ENCODE measurements at regions of chr3 and their contacts with region 1.

Region 1: GRCh38 chr3:148379763-148380382 is 317.8 kb upstream of the AGTR1 start:
- DNase-seq: no peak
- H3K4me3 ChIP-seq: no peak overlapping the region
- H3K27ac ChIP-seq: no peak overlapping the region
- H3K4me1 ChIP-seq: no peaks in the 10 kb centered on the region
- H3K27me3 ChIP-seq: no peaks in the 10 kb centered on the region
- CTCF ChIP-seq: peak; percentile 36

Region 2: DNA sequence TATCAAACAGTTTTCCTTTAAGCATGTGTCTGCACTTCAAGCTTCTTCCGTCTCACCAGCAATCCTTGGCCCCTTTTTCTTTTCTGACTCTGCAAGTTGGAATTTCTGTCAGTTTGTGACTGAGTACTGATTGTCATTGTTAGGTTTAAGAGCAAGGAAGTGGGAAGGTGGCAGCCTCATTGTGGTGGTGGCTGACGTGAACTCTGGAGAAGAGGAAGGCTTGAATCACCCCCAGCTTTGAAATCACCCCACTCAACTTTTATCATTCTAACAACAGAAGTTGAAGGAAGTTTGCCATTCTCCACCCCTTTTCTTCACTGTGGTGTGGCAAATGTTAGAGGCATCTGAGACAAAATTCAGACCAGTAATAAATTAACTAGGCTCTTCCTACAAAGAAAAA is 86.3 kb after region 1 on chr3:
- intact Hi-C with region 1: no loop called
- DNase-seq: no peak
- H3K4me3 ChIP-seq: no peak overlapping the region
- H3K27ac ChIP-seq: no peak overlapping the region
- H3K4me1 ChIP-seq: no peaks in the 10 kb centered on the region
- H3K27me3 ChIP-seq: no peaks in the 10 kb centered on the region
- CTCF ChIP-seq: no peak

Region 3: DNA sequence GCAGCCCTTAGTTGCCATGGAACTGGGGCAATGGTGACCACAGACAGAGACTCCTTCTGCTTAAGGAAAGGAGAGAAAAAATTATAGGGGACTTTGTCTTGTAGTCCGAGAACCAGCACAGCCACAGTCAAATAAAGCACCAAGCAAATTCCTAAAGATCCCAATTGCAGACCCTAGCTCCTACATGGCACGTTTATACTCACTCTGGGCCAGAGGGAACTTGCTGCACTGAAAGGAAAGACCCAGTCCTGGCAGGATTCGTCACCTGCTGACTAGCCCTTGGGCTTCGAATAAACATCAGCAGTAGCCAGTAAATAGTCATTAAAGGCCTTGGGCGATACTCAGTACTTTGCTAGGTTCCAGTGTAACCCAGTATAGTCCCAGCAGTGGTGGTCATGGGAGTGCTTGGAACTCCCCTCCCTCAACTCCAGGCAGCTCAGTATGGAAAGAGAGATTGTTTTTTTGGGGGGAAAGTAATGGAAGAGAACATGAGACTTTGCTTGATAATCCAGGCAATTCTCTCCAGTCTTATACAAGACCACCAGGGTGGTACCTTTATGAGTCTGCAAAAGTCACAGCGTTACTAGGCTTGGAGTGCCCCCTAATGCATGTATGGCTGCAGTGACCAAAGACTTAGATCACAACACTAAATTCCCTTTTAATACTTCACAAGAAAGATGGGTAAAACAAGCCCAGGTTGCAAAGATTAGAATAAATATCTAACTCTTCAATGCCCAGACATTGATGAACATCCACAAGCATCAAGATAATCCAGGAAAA is 251.4 kb after region 1 on chr3:
- intact Hi-C with region 1: loop called (anchors 5 kb)
- DNase-seq: no peak
- H3K4me3 ChIP-seq: no peak overlapping the region
- H3K27ac ChIP-seq: no peak overlapping the region
- H3K4me1 ChIP-seq: no peaks in the 10 kb centered on the region
- H3K27me3 ChIP-seq: no peaks in the 10 kb centered on the region
- CTCF ChIP-seq: no peak

Region 4: GRCh38 chr3:148718982-148719862 is 339.3 kb after region 1 on chr3:
- intact Hi-C with region 1: loop called (anchors 5 kb)
- DNase-seq: no peak
- H3K4me3 ChIP-seq: no peak overlapping the region
- H3K27ac ChIP-seq: no peak overlapping the region
- H3K4me1 ChIP-seq: no peaks in the 10 kb centered on the region
- H3K27me3 ChIP-seq: no peaks in the 10 kb centered on the region
- CTCF ChIP-seq: peak; percentile 47

Region 5: GRCh38 chr3:148943506-148944205 is 563.8 kb after region 1 on chr3:
- intact Hi-C with region 1: loop called (anchors 5 kb)
- DNase-seq: peak; percentile 23
- H3K4me3 ChIP-seq: no peak overlapping the region
- H3K27ac ChIP-seq: no peak overlapping the region
- H3K4me1 ChIP-seq: no peaks in the 10 kb centered on the region
- H3K27me3 ChIP-seq: no peaks in the 10 kb centered on the region
- CTCF ChIP-seq: peak; percentile 60

Measured in colonic mucosa (tissue), 4 donors.